ENCODE measurements at regions of chrX and their contacts with region 1.

Region 1: DNA sequence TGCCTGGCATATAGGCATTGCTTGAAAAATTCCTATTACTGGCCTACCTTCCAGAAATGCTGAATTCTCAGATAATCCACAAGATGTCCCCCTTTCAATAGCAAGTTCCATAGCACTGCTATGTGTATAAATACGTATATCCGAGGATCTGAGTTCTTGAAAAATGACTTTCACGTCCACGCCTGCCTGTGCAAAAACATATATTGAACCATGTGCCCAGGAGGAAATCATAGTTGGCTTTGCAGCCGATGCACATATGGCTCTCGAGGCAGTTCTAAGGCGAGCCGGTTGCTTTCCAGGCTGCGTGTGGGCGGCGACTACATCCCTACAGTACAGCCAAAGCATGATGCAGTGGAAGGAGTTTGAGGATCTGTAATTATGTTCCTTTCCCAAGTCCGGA is 55.4 kb upstream of the ESX1 start:
- DNase-seq: no peak
- H3K4me3 ChIP-seq: peak overlapping the region; percentile 27; the same call in 1 of the 2 replicates
- H3K27me3 ChIP-seq: no peaks in the 10 kb centered on the region
- CTCF ChIP-seq: peak; percentile 46

Region 2: GRCh38 chrX:104343428-104344129 is 33.5 kb after region 1 on chrX:
- CTCF ChIA-PET with region 1: interaction called, 17 read pairs
- POLR2A ChIA-PET with region 1: no interaction called
- DNase-seq: peak; percentile 47
- H3K4me3 ChIP-seq: no peak overlapping the region
- H3K27me3 ChIP-seq: no peaks in the 10 kb centered on the region
- CTCF ChIP-seq: peak; percentile 59

Measured in BJ (cell line).